ENCODE measurements at regions of chr5 and their contacts with region 1.

Region 1: DNA sequence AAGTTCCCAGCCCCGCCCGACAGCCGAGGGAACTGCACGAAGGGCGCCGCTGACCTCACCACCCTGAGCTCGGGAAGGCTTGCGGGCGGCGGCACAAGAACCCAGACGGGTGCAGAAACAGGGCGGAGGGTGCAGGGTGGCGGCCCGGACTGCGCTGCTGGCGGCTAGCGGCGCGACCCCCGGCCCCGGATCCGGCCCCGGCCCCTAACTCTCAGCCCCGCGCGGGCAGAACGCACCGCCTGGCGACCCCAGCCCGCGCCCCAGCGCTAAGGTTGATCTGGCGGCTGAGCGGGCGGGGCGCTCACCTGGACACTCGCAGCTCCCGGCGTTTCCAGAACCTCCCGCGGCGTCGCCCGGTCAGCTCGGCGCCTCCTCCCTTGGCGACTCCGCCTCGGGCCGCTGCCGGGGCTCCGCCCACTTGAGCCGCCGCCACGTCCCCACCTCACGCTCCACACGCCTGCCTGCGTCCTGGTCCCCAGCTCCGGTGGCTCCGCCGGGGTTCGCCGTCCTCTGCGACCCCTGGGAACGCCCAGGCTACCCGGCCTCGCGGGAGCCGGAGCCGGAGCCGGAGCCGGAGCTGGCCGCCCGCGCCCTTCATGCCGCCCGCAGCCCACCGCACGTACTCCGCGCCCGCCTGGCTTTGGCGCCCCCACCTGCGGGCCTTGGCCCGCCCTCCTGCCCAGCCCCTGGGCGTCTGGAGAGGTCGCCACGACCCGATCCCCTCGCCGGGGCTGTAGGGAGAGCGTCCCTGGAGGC is at the start of gene P4HA2:
- DNase-seq: peak in 1 of 2 donors; percentile 89
- H3K4me3 ChIP-seq: peak within 1 kb of the TSS; percentile 61 to 83
- H3K27ac ChIP-seq: peak within 1 kb of the TSS; percentile 84 to 87
- H3K4me1 ChIP-seq: peaks cover 20 to 42% of the 10 kb centered on the region in 2 donors
- H3K27me3 ChIP-seq: no peaks in the 10 kb centered on the region
- CTCF ChIP-seq: peak in 2 of 3 experiments; percentile 25 to 27
- total RNA-seq, gene P4HA2: 22.6 TPM

Region 2: GRCh38 chr5:132044207-132044606 is 183.5 kb before region 1 on chr5:
- intact Hi-C with region 1: no loop called
- DNase-seq: no peak
- H3K4me3 ChIP-seq: no peak overlapping the region
- H3K27ac ChIP-seq: no peak overlapping the region
- H3K4me1 ChIP-seq: no peaks in the 10 kb centered on the region
- H3K27me3 ChIP-seq: no peaks in the 10 kb centered on the region
- CTCF ChIP-seq: no peak

Region 3: DNA sequence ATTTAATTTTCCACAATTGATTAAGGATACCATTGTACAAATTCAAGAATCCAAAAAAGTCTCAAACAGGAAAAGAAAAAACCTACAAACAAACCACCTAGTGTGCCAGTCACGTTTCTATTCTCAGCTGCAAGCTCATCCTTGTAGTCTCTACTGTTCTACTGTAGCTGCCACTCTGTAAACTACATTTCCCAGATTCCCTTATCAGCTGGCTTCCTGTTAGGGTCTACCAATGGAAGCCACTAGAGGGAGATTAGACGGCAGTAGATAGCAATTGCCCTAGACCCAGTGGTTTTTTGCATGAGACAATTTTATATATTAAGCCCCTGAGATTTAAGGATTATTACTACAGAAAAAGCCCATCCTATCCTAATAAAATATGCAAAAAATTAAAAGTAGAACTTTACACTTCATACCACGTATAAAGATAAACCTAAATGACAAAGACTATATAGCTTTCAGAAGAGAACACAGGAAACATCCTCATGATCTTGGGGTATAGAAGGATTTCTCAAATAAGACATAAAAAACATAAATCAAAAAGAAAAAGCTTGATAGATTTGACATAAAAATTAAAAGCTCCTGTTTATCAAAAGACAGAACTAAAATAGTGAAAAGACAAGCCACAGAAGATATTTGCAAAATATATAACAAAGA is 37.4 kb before region 1 on chr5:
- intact Hi-C with region 1: loop called (anchors 5 kb)
- DNase-seq: no peak
- H3K4me3 ChIP-seq: no peak overlapping the region
- H3K27ac ChIP-seq: no peak overlapping the region
- H3K4me1 ChIP-seq: no peaks in the 10 kb centered on the region
- H3K27me3 ChIP-seq: no peaks in the 10 kb centered on the region
- CTCF ChIP-seq: peak; percentile 63 to 68 (median 68)

Region 4: GRCh38 chr5:132259069-132259851 is 31.6 kb after region 1 on chr5:
- intact Hi-C with region 1: loop called (anchors 2 kb)
- DNase-seq: peak in 1 of 2 donors; percentile 89
- H3K4me3 ChIP-seq: peak overlapping the region; percentile 62 to 81
- H3K27ac ChIP-seq: peak overlapping the region; percentile 98 to 99
- H3K4me1 ChIP-seq: peaks cover 20 to 60% of the 10 kb centered on the region in 2 donors
- H3K27me3 ChIP-seq: no peaks in the 10 kb centered on the region
- CTCF ChIP-seq: peak in 1 of 3 experiments; percentile 3

Region 5: GRCh38 chr5:132363431-132364112 is 135.9 kb after region 1 on chr5:
- intact Hi-C with region 1: loop called (anchors 5 kb)
- DNase-seq: peak in 1 of 2 donors; percentile 81
- H3K4me3 ChIP-seq: no peak overlapping the region
- H3K27ac ChIP-seq: peak overlapping the region; percentile 8 to 57
- H3K4me1 ChIP-seq: peaks cover 3 to 22% of the 10 kb centered on the region in 2 donors
- H3K27me3 ChIP-seq: no peaks in the 10 kb centered on the region
- CTCF ChIP-seq: no peak

Measured in ascending aorta (tissue), 2 donors.